GM18951 (cell line): ENCODE measurements at regions of chr14 and their contacts with region 1.

Region 1: GRCh38 chr14:95774265-95775160 is 60.6 kb upstream of the TCL1A start:
- POLR2A ChIP-seq: no peak

Region 2: GRCh38 chr14:95561001-95561412 is 213.5 kb before region 1 on chr14:
- in situ Hi-C with region 1: loop called (anchors 10 kb)
- POLR2A ChIP-seq: no peak

Region 3: GRCh38 chr14:95833429-95833828 is 58.9 kb after region 1 on chr14:
- in situ Hi-C with region 1: no loop called
- POLR2A ChIP-seq: no peak

Region 4: DNA sequence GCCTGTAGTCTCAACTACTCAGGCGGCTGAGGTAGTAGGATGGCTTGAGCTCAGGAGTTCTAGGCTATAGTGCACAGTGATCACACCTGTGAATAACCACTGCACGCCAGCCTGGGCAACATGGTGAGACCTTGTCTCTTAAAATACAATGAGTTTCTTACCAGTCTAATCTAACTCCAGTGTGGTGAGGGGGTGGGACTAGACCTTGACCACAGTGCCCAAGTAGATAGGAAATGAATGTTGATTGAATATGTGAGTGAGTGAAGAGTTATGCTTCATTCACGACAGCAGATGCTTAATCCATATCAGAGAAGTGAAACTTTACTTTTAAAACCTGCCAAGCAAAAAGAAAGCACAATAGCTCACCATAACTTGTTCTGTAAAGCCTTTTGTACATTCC is 606.2 kb after region 1 on chr14:
- in situ Hi-C with region 1: no loop called
- POLR2A ChIP-seq: no peak